Uterus (tissue), 4 donors: ENCODE measurements at regions of chr12 and their contacts with region 1.

Region 1: DNA sequence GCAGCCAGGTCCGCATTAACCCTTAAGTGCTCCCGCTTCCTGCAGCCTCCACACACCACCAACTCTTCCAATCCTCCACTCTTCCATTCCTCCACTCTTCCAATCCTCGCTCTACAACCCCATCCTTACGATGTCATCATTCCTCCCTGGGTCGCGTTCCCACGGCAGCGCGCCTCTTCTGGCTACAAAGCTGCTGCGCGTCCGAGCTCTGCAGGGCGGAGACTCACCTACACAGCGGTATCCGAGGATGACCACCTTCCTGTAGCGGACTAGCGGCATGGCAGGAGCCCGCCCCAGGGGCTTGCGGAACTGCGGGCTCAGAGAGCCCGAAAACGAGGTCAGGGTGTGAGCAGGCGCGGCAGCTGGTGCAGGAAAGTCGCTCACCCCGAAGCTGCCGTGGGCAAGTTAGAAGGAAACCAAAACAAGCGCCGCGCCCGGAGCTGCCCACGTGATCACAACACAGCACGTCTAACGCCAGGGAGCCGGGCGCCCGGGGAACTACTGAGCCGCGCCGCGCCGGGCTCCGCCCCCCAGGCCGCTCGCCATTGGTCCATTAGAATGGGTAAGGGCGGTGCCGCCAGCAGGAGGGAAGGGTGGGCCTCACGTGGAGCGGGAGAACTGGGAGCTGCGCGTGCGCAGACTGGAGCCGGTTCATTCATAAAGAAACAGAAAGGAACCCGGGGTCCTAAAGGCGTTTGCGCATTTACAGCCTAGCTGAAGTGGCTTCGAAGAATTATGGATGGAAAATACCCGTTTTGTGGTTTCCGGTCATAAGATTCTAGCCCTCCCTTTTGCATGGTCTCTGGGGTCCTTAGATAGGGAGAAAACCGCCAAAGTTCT is at the start of gene RHEBL1:
- DNase-seq: peak; percentile 98
- H3K4me3 ChIP-seq: peak within 1 kb of the TSS; percentile 79 to 81
- H3K27ac ChIP-seq: peak within 1 kb of the TSS; percentile 73
- H3K4me1 ChIP-seq: peaks cover 0 to 4% of the 10 kb centered on the region in 2 donors
- H3K27me3 ChIP-seq: no peaks in the 10 kb centered on the region
- CTCF ChIP-seq: peak in 1 of 4 experiments; percentile 30
- POLR2A ChIP-seq: peak; percentile 28 to 34
- total RNA-seq, gene RHEBL1: 0.37 TPM in 1 of 4 donors, not detected in the others

Region 2: GRCh38 chr12:49121047-49121696 is 51.4 kb after region 1 on chr12:
- intact Hi-C with region 1: loop called (anchors 10 kb)
- DNase-seq: peak in 1 of 2 donors; percentile 47
- H3K4me3 ChIP-seq: no peak overlapping the region
- H3K27ac ChIP-seq: no peak overlapping the region
- H3K4me1 ChIP-seq: no peaks in the 10 kb centered on the region
- H3K27me3 ChIP-seq: no peaks in the 10 kb centered on the region
- CTCF ChIP-seq: peak; percentile 38 to 74 (median 65)
- POLR2A ChIP-seq: no peak